Common myeloid progenitor, CD34-positive (primary cell): ENCODE measurements at regions of chr5 and their contacts with region 1.

Region 1: GRCh38 chr5:159341914-159342313 is 11.6 kb upstream of the IL12B start:
- DNase-seq: peak; percentile 90 to 97 (median 96)
- H3K4me3 ChIP-seq: no peak overlapping the region
- H3K27ac ChIP-seq: no peak overlapping the region
- H3K4me1 ChIP-seq: peaks cover 16 to 47% (median 27%) of the 10 kb centered on the region in 4 experiments
- H3K27me3 ChIP-seq: no peaks in the 10 kb centered on the region

Region 2: DNA sequence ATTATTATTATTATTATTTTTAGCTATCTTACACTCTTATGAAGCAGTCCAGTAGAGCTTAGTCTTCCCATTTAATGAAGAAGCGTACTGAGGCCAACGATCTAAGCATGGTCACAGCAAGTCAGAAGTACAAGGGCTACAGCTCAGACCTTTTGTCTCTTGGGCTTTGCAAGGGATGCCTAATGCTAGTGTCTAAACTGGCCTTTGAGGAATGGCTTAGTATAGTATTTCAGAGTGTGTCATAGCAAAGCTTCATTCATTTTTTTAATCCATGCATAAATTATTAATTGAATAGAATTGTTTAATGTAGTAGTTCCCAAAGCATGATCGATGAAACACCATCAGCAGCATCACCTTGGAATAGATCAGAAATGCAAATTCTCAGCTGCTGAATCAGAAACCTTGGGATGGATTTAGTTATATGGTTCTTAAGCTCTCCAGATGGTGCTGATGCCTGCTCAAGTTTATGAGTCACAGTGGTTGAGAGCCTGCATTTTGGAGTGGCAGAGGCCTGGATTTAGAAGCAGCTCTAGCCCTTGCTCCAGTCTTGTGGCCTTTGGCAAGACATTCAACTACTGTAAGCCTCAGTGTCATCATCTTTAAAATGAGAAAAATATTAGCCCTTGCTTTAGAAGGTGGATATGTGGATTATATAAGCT is 17.7 kb before region 1 on chr5:
- CTCF ChIA-PET with region 1: interaction called, 12 read pairs
- POLR2A ChIA-PET with region 1: no interaction called
- DNase-seq: peak in 1 of 3 donors; percentile 17
- H3K4me3 ChIP-seq: no peak overlapping the region
- H3K27ac ChIP-seq: no peak overlapping the region
- H3K4me1 ChIP-seq: no peaks in the 10 kb centered on the region
- H3K27me3 ChIP-seq: no peaks in the 10 kb centered on the region

Region 3: DNA sequence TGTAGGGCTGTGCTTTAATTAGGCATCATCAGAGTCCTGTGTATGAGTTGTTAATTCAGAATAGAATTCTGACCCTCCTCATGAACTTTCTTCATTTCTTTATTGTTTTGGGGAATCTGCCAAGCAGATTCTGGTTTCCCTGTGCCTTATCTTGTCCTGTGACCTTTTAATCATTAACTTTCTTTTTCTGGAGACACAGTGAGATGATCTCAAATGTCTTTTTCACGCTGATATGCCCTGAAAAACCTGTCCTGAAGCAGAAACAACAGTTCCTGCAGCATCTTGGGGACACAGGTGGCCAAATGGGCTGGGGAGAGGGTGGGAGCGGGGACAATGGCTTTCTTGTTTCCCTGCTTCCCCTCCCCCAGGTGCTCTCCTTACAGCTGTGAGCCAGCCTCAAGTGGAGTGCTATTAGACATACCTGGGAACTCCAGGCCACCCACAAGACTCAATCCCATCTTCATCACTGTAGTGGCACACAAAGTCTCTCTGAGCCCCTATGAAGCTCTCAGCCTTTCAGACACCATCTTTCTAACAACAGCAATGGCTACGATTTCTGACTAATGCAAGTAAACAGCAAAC is 1296.3 kb after region 1 on chr5:
- CTCF ChIA-PET with region 1: no interaction called
- POLR2A ChIA-PET with region 1: no interaction called
- DNase-seq: no peak
- H3K4me3 ChIP-seq: no peak overlapping the region
- H3K27ac ChIP-seq: no peak overlapping the region
- H3K4me1 ChIP-seq: no peaks in the 10 kb centered on the region
- H3K27me3 ChIP-seq: peaks cover 0 to 1% (median 0%) of the 10 kb centered on the region in 5 experiments